HepG2 (cell line): ENCODE measurements at regions of chr2 and their contacts with region 1.

Region 1: DNA sequence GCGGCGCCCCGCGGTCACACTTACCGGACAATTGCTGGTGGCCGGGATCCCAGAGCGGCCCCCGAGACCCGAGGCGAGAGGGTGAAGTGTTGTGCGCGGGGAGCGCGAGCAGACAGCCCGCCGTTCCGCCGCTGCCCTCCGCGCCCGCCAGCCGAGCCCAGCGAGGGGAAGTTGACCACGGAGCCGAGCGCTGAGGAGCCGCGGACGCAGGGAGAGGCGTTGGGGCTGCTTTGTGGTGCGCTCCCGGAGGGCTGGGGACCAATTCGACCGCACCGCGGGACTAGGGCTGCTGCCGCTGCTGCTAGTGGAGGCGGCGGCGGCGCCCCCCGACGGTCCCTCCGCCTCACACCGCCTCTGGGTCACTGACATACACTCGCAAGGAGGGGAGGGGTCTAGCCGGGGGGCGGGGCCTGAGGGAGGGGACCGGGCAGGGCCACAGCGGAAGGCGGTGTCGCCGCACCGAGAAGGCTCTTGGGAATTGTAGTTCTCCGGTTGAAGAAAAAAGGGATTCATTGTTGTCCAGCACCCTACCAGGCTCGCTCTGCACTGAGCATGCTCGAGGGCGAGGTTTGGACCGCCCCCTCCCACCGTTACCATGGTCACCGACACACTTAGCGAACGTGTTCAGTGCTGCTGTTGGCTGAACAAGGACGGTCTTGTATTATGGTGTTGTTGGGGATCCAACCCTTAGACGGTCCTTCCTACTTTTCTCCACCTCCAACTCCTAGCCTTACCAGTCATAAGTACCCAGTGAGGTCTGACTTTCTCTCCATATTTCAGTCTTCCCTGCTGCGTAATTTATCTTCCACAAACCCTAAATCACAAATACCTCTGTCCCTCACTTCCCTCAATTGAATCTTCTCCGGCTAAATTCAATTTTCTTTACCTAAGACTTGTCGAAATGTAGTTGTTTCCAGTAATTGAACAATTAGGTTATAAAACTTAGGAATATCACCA is at the start of gene PELI1:
- DNase-seq: peak; percentile 100
- ATAC-seq: peak; percentile 93
- H3K4me3 ChIP-seq: peak within 1 kb of the TSS; percentile 90 to 100 (median 95)
- H3K27ac ChIP-seq: peak within 1 kb of the TSS; percentile 88
- H3K4me1 ChIP-seq: peaks cover 44% of the 10 kb centered on the region
- H3K27me3 ChIP-seq: no peaks in the 10 kb centered on the region; a peak in 1 of 5 replicates
- CTCF ChIP-seq: peak; percentile 85
- EP300 ChIP-seq: 0 out of 4 replicates have a peak, but pooled peaks of 1 of the 2 experiments have one; percentile 22
- POLR2A ChIP-seq: peak; percentile 96 to 98
- RAD21 ChIP-seq: peak; percentile 83
- total RNA-seq, gene PELI1: 12.5 and 14.9 TPM in 2 replicates

Region 2: GRCh38 chr2:64052468-64053241 is 91.7 kb before region 1 on chr2:
- CTCF ChIA-PET with region 1: interaction called, 3 read pairs
- POLR2A ChIA-PET with region 1: no interaction called
- in situ Hi-C with region 1: no loop called
- intact Hi-C with region 1: loop called (anchors 2 kb)
- DNase-seq: no peak
- ATAC-seq: no peak
- H3K4me3 ChIP-seq: no peak overlapping the region
- H3K27ac ChIP-seq: no peak overlapping the region
- H3K4me1 ChIP-seq: peaks cover 10% of the 10 kb centered on the region
- H3K27me3 ChIP-seq: 0 out of 5 replicates have a peak, but pooled peaks cover 0 to 2% of the 10 kb centered on the region in 2 experiments
- CTCF ChIP-seq: no peak
- EP300 ChIP-seq: no peak
- POLR2A ChIP-seq: no peak
- RAD21 ChIP-seq: no peak

Region 3: GRCh38 chr2:64101141-64101591 is 43.2 kb before region 1 on chr2:
- CTCF ChIA-PET with region 1: no interaction called
- POLR2A ChIA-PET with region 1: interaction called, 4 read pairs
- in situ Hi-C with region 1: no loop called
- intact Hi-C with region 1: loop called (anchors 5 kb)
- DNase-seq: no peak
- ATAC-seq: no peak
- H3K4me3 ChIP-seq: no peak overlapping the region
- H3K27ac ChIP-seq: no peak overlapping the region
- H3K4me1 ChIP-seq: peaks cover 13% of the 10 kb centered on the region
- H3K27me3 ChIP-seq: no peaks in the 10 kb centered on the region
- CTCF ChIP-seq: no peak
- EP300 ChIP-seq: no peak
- POLR2A ChIP-seq: no peak
- RAD21 ChIP-seq: no peak

Region 4: GRCh38 chr2:64311948-64312621 is 167.8 kb after region 1 on chr2:
- CTCF ChIA-PET with region 1: no interaction called
- POLR2A ChIA-PET with region 1: no interaction called
- in situ Hi-C with region 1: no loop called
- intact Hi-C with region 1: loop called (anchors 2 kb)
- DNase-seq: peak; percentile 85
- ATAC-seq: peak; percentile 94
- H3K4me3 ChIP-seq: peak overlapping the region in 1 of 3 experiments; percentile 9; a peak in 2 of 6 replicates
- H3K27ac ChIP-seq: no peak overlapping the region
- H3K4me1 ChIP-seq: peaks cover 26% of the 10 kb centered on the region
- H3K27me3 ChIP-seq: peaks cover 3 to 25% of the 10 kb centered on the region in 2 experiments; a peak in 3 of 5 replicates
- CTCF ChIP-seq: peak; percentile 76
- EP300 ChIP-seq: 0 out of 4 replicates have a peak, but pooled peaks of 1 of the 2 experiments have one; percentile 21
- POLR2A ChIP-seq: no peak
- RAD21 ChIP-seq: peak; percentile 33